Activated CD4-positive, alpha-beta T cell treated with anti-CD3 and anti-CD28 coated beads for 36 hours (primary cell): ENCODE measurements at regions of chr4 and their contacts with region 1.

Region 1: GRCh38 chr4:15771216-15772058 is 6.7 kb upstream of the CD38 start:
- DNase-seq: peak; percentile 50
- ATAC-seq: peak; percentile 90
- H3K4me3 Mint-ChIP-seq: peak overlapping the region; percentile 22
- H3K27ac Mint-ChIP-seq: peak overlapping the region; percentile 83
- H3K4me1 Mint-ChIP-seq: peaks cover 67% of the 10 kb centered on the region
- H3K27me3 Mint-ChIP-seq: peaks cover 31% of the 10 kb centered on the region

Region 2: DNA sequence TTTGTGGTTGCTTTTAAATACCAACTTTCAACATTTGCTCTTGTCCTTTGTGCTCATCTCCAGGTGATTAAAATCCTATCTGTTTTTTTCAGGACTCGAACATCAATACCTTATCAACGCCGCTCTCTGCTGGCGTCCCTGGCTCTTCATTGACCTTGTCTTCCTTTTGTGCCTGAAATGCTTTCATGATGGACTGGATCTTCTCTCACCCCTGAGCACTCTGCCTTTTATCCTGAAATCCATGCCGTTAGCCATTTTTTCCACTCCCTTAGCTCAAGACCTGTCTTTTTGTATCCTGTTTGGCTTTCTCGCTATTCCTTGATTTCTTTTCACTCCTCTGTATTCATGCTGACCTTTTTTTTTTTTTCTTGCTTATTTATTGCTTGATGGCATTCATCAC is 1318.7 kb before region 1 on chr4:
- CTCF ChIA-PET with region 1: no interaction called
- POLR2A ChIA-PET with region 1: no interaction called
- intact Hi-C with region 1: no loop called
- DNase-seq: no peak
- ATAC-seq: no peak
- H3K4me3 Mint-ChIP-seq: no peak overlapping the region
- H3K27ac Mint-ChIP-seq: no peak overlapping the region
- H3K4me1 Mint-ChIP-seq: no peaks in the 10 kb centered on the region
- H3K27me3 Mint-ChIP-seq: no peaks in the 10 kb centered on the region

Region 3: GRCh38 chr4:14924812-14925344 is 846.6 kb before region 1 on chr4:
- CTCF ChIA-PET with region 1: no interaction called
- POLR2A ChIA-PET with region 1: no interaction called
- intact Hi-C with region 1: no loop called
- DNase-seq: peak; percentile 15
- ATAC-seq: peak; percentile 6
- H3K4me3 Mint-ChIP-seq: no peak overlapping the region
- H3K27ac Mint-ChIP-seq: no peak overlapping the region
- H3K4me1 Mint-ChIP-seq: no peaks in the 10 kb centered on the region
- H3K27me3 Mint-ChIP-seq: no peaks in the 10 kb centered on the region

Region 4: DNA sequence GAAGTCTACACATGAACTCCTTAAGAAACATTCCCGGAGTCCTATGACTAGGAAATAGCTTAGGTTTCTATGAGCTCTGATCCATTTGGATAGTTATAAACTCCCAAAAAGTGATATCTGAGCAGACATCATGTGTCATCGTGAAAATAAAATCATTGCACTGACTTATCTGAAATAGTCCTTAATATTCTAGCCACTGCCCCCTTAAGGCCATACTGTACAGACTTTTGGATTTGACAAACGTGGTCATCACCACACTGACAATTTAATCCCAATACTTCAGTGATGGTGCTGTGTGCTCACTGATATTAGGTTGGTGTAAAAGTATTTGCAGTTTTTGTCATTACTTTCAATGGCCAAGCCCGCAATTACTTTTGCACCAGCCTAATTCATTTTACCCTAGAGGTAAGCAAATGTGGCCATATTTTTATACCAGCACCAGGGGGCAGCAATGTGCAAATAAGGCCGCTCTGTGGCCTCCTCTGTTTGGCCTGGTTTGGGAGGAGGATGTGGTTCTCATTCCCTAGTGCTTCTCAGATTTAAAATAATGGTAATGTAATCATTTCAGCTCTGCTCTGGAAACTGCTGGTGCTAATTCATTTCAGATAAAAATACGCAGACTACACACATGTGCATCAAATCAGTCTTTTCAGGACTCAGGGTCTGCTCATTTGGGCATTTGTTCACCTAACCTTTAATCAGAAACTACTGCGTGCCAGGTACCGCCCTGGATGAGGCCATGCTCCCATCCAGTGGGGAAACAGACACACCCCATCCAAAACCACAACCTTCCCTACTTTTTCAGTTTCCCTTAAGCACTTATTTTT is 540.0 kb before region 1 on chr4:
- CTCF ChIA-PET with region 1: no interaction called
- POLR2A ChIA-PET with region 1: no interaction called
- intact Hi-C with region 1: loop called in 1 of 2 experiments (anchors 5 kb)
- DNase-seq: peak; percentile 85
- ATAC-seq: peak; percentile 65
- H3K4me3 Mint-ChIP-seq: no peak overlapping the region
- H3K27ac Mint-ChIP-seq: no peak overlapping the region
- H3K4me1 Mint-ChIP-seq: peaks cover 31% of the 10 kb centered on the region
- H3K27me3 Mint-ChIP-seq: no peaks in the 10 kb centered on the region

Region 5: DNA sequence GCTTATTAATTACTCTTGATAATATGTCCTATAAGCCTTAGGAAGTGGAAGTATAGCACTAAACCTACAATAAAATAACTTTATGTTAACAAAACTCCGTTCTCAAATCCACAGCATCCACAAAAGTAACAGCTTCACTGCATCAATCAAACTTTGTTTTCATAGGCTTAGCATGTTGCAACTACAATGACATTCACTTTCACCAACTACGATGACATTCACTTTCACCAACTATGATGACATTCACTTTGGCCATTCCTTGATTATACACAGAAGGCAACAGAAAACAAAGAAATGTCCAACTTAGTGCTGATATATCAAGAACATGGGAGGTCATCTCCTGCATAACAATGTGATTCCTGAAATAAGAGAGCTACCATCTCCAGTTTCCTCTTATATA is 160.6 kb before region 1 on chr4:
- CTCF ChIA-PET with region 1: no interaction called
- POLR2A ChIA-PET with region 1: no interaction called
- intact Hi-C with region 1: no loop called
- DNase-seq: no peak
- ATAC-seq: no peak
- H3K4me3 Mint-ChIP-seq: no peak overlapping the region
- H3K27ac Mint-ChIP-seq: no peak overlapping the region
- H3K4me1 Mint-ChIP-seq: peaks cover 11% of the 10 kb centered on the region
- H3K27me3 Mint-ChIP-seq: no peaks in the 10 kb centered on the region

Region 6: DNA sequence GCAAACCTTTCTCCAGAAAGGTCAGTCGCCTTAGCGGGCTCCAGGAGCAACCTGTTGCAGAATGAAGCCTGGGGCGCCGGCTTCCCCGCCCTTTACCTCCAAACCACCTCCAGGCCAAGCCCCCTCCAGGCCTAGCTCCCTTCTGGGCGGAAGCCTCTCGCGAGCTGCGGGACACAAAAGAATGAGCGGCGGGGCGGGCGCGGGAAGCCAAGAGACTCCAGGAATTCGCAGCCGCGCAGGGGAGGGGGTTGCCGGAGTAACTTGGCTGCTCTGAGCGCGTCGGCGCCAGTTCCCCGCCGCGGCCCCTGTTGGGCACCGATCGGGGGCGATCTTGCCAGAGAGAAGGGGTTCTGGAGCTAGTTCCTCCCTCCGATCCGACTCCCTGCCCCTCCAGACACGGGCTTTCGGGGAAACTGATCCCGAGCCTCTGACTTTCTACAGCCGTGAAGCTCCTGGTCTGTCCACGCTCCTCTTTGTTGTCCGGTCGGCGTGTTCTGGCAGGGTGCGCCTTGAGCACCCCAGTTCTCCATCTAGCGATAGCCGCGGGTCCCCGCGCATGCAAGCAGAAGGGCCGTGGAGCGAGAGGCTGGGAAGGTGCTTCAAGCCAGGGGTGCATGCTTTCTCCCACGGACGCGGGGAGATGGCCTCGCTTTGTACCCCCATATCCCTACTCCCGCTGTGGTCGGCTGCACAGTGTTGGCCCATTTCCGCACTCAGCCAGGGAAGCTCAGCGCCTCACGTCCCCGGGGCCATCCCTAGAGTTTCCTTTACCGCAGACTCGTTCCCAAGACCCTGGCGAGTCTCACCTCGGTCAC is 311.2 kb after region 1 on chr4:
- CTCF ChIA-PET with region 1: no interaction called
- POLR2A ChIA-PET with region 1: no interaction called
- intact Hi-C with region 1: no loop called
- DNase-seq: peak; percentile 38
- ATAC-seq: peak; percentile 20
- H3K4me3 Mint-ChIP-seq: peak overlapping the region; percentile 58
- H3K27ac Mint-ChIP-seq: no peak overlapping the region
- H3K4me1 Mint-ChIP-seq: peaks cover 19% of the 10 kb centered on the region
- H3K27me3 Mint-ChIP-seq: peaks cover 64% of the 10 kb centered on the region